ENCODE measurements at regions of chr14 and their contacts with region 1.

Region 1: DNA sequence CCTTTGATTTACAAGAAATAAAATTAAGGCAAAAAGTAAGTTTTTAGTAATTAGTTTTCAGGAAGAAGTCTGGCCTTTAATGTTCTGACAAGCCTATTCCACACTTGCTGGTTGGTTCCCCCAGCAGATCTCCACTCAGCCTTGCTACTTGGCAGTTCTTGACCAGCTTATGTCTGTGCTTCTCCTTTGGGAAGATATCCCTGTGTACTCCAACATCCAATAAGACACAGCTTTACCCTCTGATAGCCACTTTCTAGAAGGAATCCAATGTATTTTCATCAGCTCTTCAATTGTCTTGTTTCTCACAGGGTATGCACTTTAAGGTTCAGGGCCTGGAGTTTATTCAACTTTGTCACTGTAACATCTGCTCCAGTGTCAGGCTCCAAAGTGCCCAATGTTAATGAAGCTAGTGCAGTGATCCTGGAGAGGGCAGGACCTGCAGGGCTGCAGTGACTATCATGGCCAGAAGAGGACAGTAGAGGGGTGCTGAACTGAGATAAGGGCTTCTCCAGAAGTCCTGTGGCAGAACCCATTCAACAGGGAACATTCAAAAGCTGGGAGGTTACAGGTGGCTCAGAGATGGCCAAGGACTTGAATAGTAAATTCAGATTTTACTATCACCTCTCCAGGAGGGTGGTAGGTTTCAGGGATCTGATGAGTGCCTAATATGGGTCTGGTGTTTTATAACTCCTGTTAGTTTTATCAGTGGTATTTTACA is 22.9 kb downstream of the JKAMP start:
- DNase-seq: peak; percentile 74

Region 2: GRCh38 chr14:59320763-59321640 is 186.2 kb before region 1 on chr14:
- CTCF ChIA-PET with region 1: no interaction called
- POLR2A ChIA-PET with region 1: no interaction called
- DNase-seq: no peak

Region 3: GRCh38 chr14:59464486-59465315 is 42.5 kb before region 1 on chr14:
- CTCF ChIA-PET with region 1: no interaction called
- POLR2A ChIA-PET with region 1: no interaction called
- DNase-seq: no peak

Region 4: DNA sequence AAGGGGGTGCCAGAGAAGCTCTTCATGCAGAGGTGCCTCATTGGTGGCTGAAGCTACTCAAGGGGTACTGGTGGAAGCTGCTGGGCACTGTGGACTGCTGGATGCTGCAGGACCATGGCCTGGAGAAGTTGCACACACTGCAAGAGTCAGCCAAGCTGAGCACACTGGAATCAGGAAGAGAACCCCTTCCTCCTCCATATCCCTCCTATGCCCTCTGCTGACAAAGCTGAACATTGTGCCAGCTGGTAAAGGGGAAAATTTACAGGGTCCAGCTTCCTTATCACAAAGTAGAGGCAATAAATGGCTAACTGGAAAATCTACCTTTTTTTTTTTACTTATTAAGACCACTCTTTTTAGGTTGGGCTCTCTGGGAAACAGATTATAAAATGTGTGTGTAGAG is 62.9 kb after region 1 on chr14:
- CTCF ChIA-PET with region 1: interaction called, 18 read pairs
- POLR2A ChIA-PET with region 1: no interaction called
- DNase-seq: no peak

Region 5: DNA sequence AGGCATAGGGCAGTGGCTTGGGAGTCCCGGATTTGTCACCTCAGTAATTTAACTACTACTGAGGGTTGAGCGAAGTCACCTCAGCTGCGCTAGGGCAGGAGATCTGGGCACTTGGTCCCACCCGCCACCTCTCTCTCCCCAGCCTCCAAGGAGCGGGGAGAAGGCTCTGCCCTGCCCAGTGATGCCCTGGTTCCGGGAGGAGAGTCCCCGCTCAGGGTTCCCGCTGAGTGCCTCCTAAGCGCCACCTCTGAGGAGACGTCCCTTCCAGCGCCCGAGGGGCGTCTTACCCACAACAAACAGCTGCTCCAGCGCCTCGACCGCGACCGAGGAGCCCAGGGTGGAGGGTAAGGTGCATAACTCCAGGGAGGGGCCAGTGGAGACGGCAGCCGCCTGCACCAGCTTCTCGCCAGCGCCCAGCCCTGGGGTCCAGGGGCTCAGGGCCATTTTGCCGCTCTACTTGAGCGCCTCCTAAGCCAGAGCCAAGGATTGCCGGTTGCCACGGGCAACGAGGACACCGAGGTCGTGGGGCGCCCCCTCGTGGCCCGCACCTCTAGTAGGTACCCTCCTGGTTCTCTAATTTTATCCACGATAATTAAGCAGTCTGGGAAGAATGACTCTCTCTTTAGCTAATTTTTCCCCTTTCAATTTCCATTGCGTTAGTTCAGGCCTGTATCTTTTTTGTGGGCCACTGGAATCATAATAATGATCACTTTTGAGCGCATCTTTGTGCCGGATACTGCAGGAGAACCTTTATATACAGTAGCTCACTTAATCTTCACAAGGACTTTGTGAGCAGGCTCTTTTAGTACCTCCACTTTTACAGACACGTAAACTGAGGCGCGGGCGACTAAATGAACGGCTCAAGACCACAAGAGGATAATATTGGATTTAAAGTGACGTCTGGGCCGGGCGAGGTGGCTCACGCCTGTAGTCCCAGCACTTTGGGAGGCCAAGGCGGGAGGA is 69.4 kb after region 1 on chr14 and contains the start of gene CCDC175:
- CTCF ChIA-PET with region 1: interaction called, 56 read pairs
- POLR2A ChIA-PET with region 1: interaction called, 4 read pairs
- DNase-seq: peak; percentile 90

Region 6: GRCh38 chr14:59897761-59898383 is 390.6 kb after region 1 on chr14:
- CTCF ChIA-PET with region 1: interaction called, 13 read pairs
- POLR2A ChIA-PET with region 1: no interaction called
- DNase-seq: peak; percentile 58

Region 7: GRCh38 chr14:60532442-60532841 is 1025.2 kb after region 1 on chr14:
- CTCF ChIA-PET with region 1: no interaction called
- POLR2A ChIA-PET with region 1: no interaction called
- DNase-seq: no peak